ENCODE measurements at regions of chrX and their contacts with region 1.

Region 1: GRCh38 chrX:68828740-68829552 is at the start of gene EFNB1:
- DNase-seq: peak; percentile 86 to 95 (median 90)
- ATAC-seq: peak; percentile 91 to 94 (median 92)
- H3K4me3 ChIP-seq: peak within 1 kb of the TSS; percentile 61 to 67 (median 64)
- H3K27ac ChIP-seq: peak within 1 kb of the TSS in 3 of 4 donors; percentile 46 to 57 (median 57)
- H3K4me1 ChIP-seq: no peaks in the 10 kb centered on the region
- H3K27me3 ChIP-seq: peaks cover 0 to 5% (median 0%) of the 10 kb centered on the region in 4 donors
- CTCF ChIP-seq: no peak
- total RNA-seq, gene EFNB1: 2.4 to 13.3 (median 4.9) TPM

Region 2: DNA sequence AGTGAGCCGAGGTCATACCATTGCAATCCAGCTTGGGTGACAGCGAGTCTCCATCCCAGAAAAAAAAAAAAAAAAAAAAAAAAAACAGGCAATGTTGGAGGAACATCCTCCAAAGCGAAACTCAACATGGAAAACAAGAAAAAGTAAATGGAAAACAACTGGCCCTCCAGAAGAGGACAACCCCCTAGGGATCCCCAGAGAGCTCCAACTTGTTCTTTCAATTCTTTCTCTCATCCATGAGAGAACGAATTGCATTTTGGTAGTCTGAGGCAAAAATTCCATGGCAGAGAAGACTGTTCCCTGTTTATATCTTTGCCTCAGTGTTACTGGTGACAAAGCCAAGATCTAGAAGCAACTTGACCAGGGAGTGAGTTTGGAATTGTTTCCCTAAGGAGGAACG is 445.4 kb before region 1 on chrX:
- intact Hi-C with region 1: no loop called
- DNase-seq: no peak
- ATAC-seq: no peak
- H3K4me3 ChIP-seq: no peak overlapping the region
- H3K27ac ChIP-seq: no peak overlapping the region
- H3K4me1 ChIP-seq: no peaks in the 10 kb centered on the region
- H3K27me3 ChIP-seq: no peaks in the 10 kb centered on the region
- CTCF ChIP-seq: no peak

Region 3: GRCh38 chrX:69060631-69061408 is 231.9 kb after region 1 on chrX:
- intact Hi-C with region 1: loop called in 1 of 3 experiments (anchors 5 kb)
- DNase-seq: peak in 5 of 6 donors; percentile 28 to 43 (median 38)
- ATAC-seq: peak; percentile 58 to 93 (median 82)
- H3K4me3 ChIP-seq: no peak overlapping the region
- H3K27ac ChIP-seq: no peak overlapping the region
- H3K4me1 ChIP-seq: no peaks in the 10 kb centered on the region
- H3K27me3 ChIP-seq: peaks cover 0 to 8% (median 0%) of the 10 kb centered on the region in 4 donors
- CTCF ChIP-seq: no peak

Region 4: DNA sequence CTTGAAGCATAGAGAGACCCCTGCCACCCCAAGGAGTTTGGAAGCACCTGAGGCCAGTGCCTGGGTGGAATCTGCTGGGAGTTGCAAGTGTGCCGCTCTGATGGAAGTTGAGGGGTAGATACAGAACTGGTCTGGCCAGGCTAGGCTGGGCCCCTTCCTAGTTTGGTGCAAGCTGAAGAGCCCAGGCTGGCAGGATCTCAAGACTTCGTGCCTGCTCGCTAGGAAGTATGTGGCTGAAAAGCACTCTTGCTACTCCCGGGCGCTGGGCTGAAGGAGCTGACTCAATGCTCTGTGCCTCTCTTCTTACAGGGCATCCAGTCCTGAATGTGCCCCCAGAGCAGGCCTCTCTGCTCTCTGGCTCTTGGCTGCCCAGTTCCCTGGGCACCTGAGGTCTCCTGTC is 388.0 kb after region 1 on chrX:
- intact Hi-C with region 1: loop called in 2 of 3 experiments (anchors 5 to 10 kb)
- DNase-seq: no peak
- ATAC-seq: no peak
- H3K4me3 ChIP-seq: no peak overlapping the region
- H3K27ac ChIP-seq: no peak overlapping the region
- H3K4me1 ChIP-seq: no peaks in the 10 kb centered on the region
- H3K27me3 ChIP-seq: no peaks in the 10 kb centered on the region
- CTCF ChIP-seq: no peak

Region 5: GRCh38 chrX:69280933-69281332 is 452.0 kb after region 1 on chrX:
- intact Hi-C with region 1: loop called in 2 of 3 experiments (anchors 5 kb)
- DNase-seq: peak in 3 of 6 donors; percentile 21 to 32 (median 21)
- ATAC-seq: peak; percentile 74 to 89 (median 84)
- H3K4me3 ChIP-seq: no peak overlapping the region
- H3K27ac ChIP-seq: no peak overlapping the region
- H3K4me1 ChIP-seq: peaks cover 0 to 8% (median 3%) of the 10 kb centered on the region in 3 donors
- H3K27me3 ChIP-seq: peaks cover 0 to 8% (median 0%) of the 10 kb centered on the region in 4 donors
- CTCF ChIP-seq: no peak

Region 6: DNA sequence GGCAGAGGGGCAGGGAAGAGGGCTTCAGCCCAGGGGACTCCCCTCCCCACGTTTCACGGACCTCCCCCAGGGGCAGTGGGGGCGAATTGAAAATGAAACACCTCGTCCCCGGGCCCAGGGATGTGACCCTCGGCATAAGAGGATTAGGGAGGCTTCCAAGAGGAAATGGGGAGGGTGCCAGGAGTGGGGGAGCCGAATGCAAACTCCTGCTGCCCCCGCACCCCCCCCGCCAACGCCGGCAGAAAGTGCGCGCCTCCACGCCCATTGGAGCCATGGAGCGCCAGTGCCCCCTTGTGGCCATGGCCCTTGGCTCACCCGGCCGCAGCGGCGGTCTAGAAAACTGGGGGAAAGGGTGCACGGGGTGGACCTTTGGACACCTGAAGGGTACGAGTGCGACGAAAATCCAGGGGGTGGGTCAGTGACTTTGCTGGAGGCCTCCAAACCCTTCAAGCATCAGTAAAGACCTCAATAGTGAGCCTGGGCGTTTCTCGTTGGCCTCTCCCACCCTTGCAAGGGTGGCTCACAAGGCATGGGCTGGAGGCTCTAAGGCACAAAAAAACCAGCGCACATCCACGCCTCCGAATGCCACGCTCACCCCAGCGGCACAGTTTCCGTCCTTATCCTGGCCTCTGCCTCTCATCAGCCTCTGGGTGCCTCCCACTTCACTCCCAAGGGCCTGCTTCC is 457.1 kb after region 1 on chrX:
- intact Hi-C with region 1: loop called in 2 of 3 experiments (anchors 5 kb)
- DNase-seq: peak; percentile 26 to 90 (median 67)
- ATAC-seq: peak; percentile 83 to 90 (median 88)
- H3K4me3 ChIP-seq: peak overlapping the region in 2 of 4 donors; percentile 13 to 39
- H3K27ac ChIP-seq: no peak overlapping the region
- H3K4me1 ChIP-seq: no peaks in the 10 kb centered on the region
- H3K27me3 ChIP-seq: peaks cover 0 to 8% (median 0%) of the 10 kb centered on the region in 4 donors
- CTCF ChIP-seq: peak; percentile 72 to 96 (median 90)

Region 7: GRCh38 chrX:69387567-69388487 is 558.9 kb after region 1 on chrX:
- intact Hi-C with region 1: loop called in 1 of 3 experiments (anchors 10 kb)
- DNase-seq: peak in 5 of 6 donors; percentile 3 to 73 (median 46)
- ATAC-seq: peak; percentile 43 to 85 (median 82)
- H3K4me3 ChIP-seq: no peak overlapping the region
- H3K27ac ChIP-seq: no peak overlapping the region
- H3K4me1 ChIP-seq: no peaks in the 10 kb centered on the region
- H3K27me3 ChIP-seq: peaks cover 0 to 31% (median 2%) of the 10 kb centered on the region in 4 donors
- CTCF ChIP-seq: peak; percentile 32 to 73 (median 60)

Measured in pancreas (tissue), 10 donors.